Activated T-helper 1 cell treated with anti-CD3 and anti-CD28 coated beads, Interleukin-12 subunit alpha, Interleukin-12 subunit beta, Interleukin-2, Interleukin-4 antibody, amounts not matched to agents 30 ng/mL and 10 ng/mL and 1 ng/mL, durations not matched to agents 14 hours and 24 hours and 36 hours (primary cell): ENCODE measurements at regions of chr13 and their contacts with region 1.

Region 1: GRCh38 chr13:33723772-33724435 is 94.0 kb upstream of the RFC3 start:
- DNase-seq: peak; percentile 51
- H3K4me3 Mint-ChIP-seq: no peak overlapping the region
- H3K27ac Mint-ChIP-seq: peak overlapping the region; percentile 84
- H3K4me1 Mint-ChIP-seq: peaks cover 49% of the 10 kb centered on the region
- H3K27me3 Mint-ChIP-seq: no peaks in the 10 kb centered on the region

Region 2: DNA sequence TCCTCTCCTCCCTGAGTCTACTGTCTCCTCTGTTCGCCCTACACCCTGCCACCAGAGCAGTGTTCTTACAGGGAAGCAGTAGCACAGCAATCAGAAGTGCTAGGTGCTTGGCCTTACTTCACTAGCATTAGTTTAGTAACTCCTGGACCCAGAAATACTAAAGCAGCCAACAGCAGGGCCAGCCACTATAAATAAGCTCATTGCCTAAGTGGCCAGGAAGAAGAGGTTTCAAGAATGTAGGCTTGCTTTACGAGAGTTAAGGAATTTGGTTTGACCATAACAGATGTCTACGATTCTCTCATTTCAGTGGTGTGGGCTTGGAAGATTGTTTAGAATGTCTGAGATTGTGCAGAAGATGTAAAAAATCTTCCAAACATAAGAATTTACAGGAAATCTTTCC is 1512.1 kb before region 1 on chr13:
- intact Hi-C with region 1: no loop called
- DNase-seq: no peak
- H3K4me3 Mint-ChIP-seq: no peak overlapping the region
- H3K27ac Mint-ChIP-seq: no peak overlapping the region
- H3K4me1 Mint-ChIP-seq: no peaks in the 10 kb centered on the region
- H3K27me3 Mint-ChIP-seq: no peaks in the 10 kb centered on the region

Region 3: DNA sequence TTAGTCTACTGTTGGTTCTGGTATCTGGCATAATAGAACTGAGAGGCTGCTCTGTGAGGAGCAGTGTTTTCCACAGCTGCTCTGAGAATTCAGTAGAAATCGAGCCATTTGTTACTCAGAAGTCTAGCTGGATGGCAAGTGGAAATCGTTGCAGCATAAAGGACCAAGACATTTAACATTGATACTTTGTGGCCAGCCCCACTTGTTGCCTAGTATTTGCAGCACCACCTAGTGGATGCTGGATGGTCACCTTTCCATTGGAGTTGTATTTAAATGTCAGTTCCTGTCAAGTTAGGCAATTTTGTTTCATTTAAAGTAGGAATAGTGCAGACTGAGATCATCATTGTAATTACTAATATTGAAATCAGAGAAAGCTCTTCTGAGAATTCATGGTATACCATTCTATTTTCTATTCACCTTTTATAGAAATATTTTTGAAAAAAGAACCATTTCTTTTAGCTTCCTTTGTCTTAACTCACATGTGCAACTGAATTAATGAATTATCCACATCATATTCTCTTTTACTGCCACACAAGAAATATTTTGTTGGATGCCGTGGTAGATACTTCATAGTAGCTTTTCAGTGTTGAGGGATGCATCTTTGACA is 1073.1 kb before region 1 on chr13:
- intact Hi-C with region 1: loop called (anchors 10 kb)
- DNase-seq: peak; percentile 42
- H3K4me3 Mint-ChIP-seq: no peak overlapping the region
- H3K27ac Mint-ChIP-seq: no peak overlapping the region
- H3K4me1 Mint-ChIP-seq: peaks cover 52% of the 10 kb centered on the region
- H3K27me3 Mint-ChIP-seq: no peaks in the 10 kb centered on the region

Region 4: GRCh38 chr13:33072283-33072682 is 651.6 kb before region 1 on chr13:
- intact Hi-C with region 1: loop called (anchors 10 kb)
- DNase-seq: peak; percentile 3
- H3K4me3 Mint-ChIP-seq: no peak overlapping the region
- H3K27ac Mint-ChIP-seq: peak overlapping the region; percentile 55
- H3K4me1 Mint-ChIP-seq: peaks cover 35% of the 10 kb centered on the region
- H3K27me3 Mint-ChIP-seq: no peaks in the 10 kb centered on the region

Region 5: DNA sequence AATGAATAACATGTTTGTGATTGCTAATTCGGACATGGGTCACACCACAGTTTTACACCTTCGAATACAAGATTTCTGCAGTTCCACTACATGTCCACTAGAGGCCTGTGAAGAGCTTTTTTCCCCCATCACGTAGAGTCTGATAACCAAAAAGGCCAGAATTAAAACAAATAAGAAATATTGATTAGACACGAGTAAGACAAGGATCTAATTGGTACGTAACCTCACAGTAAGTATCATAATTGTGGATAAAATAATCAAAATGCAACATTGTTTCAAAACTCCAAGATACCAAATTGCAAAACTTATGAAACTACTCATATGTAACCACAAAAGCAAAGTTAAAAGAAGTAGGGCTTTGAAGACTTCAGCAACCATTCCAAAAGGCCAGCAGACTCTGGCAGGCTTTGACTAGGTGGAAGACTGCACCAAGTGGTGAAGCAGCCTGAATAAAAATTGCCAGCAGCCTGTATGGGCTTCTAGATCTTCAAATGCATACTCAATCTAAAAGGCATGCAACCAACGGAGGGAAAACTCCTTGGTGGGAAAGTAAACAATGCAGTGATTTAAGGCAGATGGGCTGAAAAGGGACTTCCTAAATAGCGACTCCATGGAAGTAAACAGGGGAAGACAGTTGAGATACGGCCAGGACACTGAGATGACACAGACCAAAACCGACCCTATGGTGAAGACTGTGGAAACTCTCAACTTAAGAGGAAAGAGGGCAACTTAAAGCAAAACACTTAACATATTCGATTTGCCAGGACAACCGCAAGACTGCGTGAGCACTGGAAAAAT is 495.1 kb before region 1 on chr13:
- intact Hi-C with region 1: loop called (anchors 1 kb)
- DNase-seq: no peak
- H3K4me3 Mint-ChIP-seq: no peak overlapping the region
- H3K27ac Mint-ChIP-seq: no peak overlapping the region
- H3K4me1 Mint-ChIP-seq: peaks cover 11% of the 10 kb centered on the region
- H3K27me3 Mint-ChIP-seq: no peaks in the 10 kb centered on the region

Region 6: DNA sequence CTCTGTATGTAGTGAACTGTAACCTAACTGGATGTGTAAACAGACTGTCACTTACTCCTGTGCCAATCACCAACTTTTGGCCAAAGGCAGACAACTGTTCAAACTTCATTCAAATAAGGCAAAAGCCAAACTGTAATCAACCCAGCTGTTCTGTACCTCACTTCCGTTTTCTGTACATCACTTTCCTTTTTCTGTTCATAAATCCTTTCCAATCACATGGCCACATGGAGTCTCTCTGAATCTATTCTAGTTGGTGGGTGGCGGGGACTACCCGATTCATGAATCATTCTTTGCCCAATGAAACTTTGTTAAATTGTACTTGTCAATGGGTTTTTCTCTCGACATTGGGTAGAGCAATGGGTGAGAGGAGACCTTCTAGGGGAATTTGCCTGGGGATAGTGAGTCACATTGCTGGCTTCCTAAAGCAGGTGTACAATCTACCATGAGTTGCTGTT is 84.3 kb before region 1 on chr13:
- intact Hi-C with region 1: loop called (anchors 1 kb)
- DNase-seq: no peak
- H3K4me3 Mint-ChIP-seq: no peak overlapping the region
- H3K27ac Mint-ChIP-seq: peak overlapping the region; percentile 75
- H3K4me1 Mint-ChIP-seq: peaks cover 45% of the 10 kb centered on the region
- H3K27me3 Mint-ChIP-seq: peaks cover 2% of the 10 kb centered on the region

Region 7: DNA sequence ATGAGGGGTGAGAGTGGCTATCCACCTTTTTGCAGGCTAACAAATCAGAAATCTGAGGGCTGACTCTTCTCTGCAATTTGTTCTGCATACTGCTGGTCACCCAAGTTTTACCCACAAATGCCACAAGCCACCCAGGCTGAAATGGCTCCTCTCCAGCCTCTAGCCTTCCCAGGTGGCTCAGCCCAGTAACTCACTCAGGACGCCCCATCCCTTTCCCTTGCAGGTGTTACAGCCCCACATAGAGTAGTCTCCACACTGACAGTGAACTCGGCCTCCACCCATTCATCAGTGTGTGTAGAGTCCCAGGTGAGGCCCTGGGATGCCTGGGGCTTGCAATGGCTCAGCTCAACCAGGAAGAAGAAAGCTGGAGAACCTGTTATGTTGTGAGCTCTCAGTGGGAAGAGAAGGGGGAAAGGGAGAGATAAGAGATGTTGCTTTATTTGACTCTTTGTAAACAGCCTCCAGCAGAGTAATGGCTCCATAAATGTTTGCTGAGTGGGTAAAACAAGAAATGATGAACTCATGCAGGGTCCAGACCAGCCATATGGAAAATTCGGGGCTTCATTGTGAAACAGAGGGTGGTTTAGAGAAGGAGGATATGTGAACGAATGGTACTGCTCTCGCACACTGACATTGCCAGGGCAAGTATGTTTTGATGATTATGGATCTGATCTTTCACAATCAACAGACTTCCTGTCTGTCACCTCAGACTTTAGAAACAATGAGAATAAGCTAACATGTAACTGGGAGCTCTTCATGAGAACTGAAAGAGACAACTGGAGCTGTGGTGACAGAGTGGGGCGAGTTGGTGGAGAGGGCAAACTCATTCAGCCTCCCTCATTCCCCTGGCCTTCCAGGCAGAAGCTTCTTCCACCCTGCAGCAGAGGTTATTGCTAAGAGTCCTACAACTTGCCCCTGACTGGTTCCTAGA is 19.8 kb after region 1 on chr13:
- intact Hi-C with region 1: loop called (anchors 2 kb)
- DNase-seq: peak; percentile 8
- H3K4me3 Mint-ChIP-seq: peak overlapping the region; percentile 37
- H3K27ac Mint-ChIP-seq: peak overlapping the region; percentile 49
- H3K4me1 Mint-ChIP-seq: peaks cover 18% of the 10 kb centered on the region
- H3K27me3 Mint-ChIP-seq: no peaks in the 10 kb centered on the region

Region 8: GRCh38 chr13:33799950-33800592 is 76.2 kb after region 1 on chr13:
- intact Hi-C with region 1: no loop called
- DNase-seq: no peak
- H3K4me3 Mint-ChIP-seq: no peak overlapping the region
- H3K27ac Mint-ChIP-seq: no peak overlapping the region
- H3K4me1 Mint-ChIP-seq: no peaks in the 10 kb centered on the region
- H3K27me3 Mint-ChIP-seq: peaks cover 14% of the 10 kb centered on the region

Region 9: GRCh38 chr13:33978653-33979290 is 254.9 kb after region 1 on chr13:
- intact Hi-C with region 1: no loop called
- DNase-seq: no peak
- H3K4me3 Mint-ChIP-seq: no peak overlapping the region
- H3K27ac Mint-ChIP-seq: no peak overlapping the region
- H3K4me1 Mint-ChIP-seq: no peaks in the 10 kb centered on the region
- H3K27me3 Mint-ChIP-seq: no peaks in the 10 kb centered on the region